PC-9 (cell line): ENCODE measurements at regions of chr3 and their contacts with region 1.

Region 1: DNA sequence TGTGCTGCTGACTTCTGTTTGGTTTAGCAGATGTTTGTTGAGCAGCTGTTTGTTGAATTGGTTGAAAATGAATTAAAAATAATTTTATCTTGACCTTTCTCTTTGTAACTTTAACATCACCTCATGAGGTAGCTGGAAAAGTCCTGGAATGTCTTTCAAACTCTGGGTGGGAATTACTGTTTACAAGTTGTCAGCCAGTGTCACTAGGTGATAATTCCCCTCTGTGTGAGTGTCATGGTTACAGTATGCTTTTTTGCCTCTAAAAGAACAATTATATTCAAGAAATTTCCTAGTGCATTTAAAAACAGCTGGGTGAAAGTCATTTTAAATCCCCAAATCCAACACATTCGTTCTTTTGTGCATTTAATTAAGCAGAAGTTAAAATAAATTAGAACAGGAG is 113.2 kb downstream of the PTPRG start:
- DNase-seq: no peak
- H3K4me3 ChIP-seq: no peak overlapping the region
- H3K27ac ChIP-seq: no peak overlapping the region
- H3K4me1 ChIP-seq: no peaks in the 10 kb centered on the region
- H3K27me3 ChIP-seq: no peaks in the 10 kb centered on the region
- CTCF ChIP-seq: no peak

Region 2: DNA sequence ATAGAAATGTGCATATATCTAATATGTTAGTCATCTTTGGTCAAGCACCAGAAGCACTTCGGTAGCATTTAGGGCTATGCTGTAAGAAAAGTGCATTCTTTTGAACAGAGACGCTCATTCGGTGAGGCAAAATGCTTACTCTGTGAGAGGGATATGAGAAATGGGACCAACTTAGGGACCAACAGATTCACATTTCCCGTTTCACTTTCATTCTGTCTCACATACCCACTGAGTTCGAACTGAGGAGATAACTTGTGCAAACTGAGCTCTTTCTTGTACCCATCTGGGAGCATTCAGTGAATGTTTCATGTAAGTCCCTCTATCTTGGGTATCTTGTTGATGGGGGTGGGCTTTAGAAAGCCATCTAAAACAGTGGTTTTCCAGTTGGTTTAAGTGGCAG is 563.4 kb after region 1 on chr3:
- CTCF ChIA-PET with region 1: no interaction called
- POLR2A ChIA-PET with region 1: interaction called, 10 read pairs
- intact Hi-C with region 1: no loop called
- DNase-seq: no peak
- H3K4me3 ChIP-seq: no peak overlapping the region
- H3K27ac ChIP-seq: no peak overlapping the region
- H3K4me1 ChIP-seq: no peaks in the 10 kb centered on the region
- H3K27me3 ChIP-seq: no peaks in the 10 kb centered on the region
- CTCF ChIP-seq: no peak